Natural killer cell (primary cell): ENCODE measurements at regions of chr19 and their contacts with region 1.

Region 1: DNA sequence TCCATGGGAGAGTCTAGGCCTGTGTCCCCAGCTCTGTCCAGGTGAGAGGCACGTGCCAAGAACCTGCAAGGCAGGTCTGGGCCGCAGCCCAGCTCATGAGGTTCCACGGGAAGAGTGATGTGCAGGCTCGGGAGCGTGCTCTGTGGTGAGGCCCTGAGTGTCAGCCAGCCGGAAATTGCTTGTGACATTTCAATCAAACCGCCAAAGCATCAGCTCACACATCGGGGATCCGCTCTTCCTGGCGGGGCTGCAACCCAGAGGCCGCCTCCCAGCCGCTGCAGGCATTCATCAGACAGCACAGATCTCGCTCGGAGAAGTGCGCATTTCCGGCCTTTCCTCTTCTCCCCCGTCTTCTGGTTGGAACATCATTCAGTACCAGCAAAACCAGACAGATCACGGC is 109.3 kb downstream of the KDM4B start:
- DNase-seq: peak in 1 of 2 donors; percentile 69
- ATAC-seq: peak; percentile 22 to 65 (median 58)
- H3K4me3 ChIP-seq: no peak overlapping the region
- H3K4me3 Mint-ChIP-seq: no peak overlapping the region
- H3K27ac ChIP-seq: peak overlapping the region; percentile 35
- H3K27ac Mint-ChIP-seq: peak overlapping the region; percentile 65 to 73
- H3K4me1 ChIP-seq: peaks cover 54% of the 10 kb centered on the region
- H3K4me1 Mint-ChIP-seq: peaks cover 45 to 49% of the 10 kb centered on the region in 2 donors
- H3K27me3 ChIP-seq: no peaks in the 10 kb centered on the region
- H3K27me3 Mint-ChIP-seq: no peaks in the 10 kb centered on the region
- CTCF ChIP-seq: no peak

Region 2: GRCh38 chr19:5038631-5039271 is 39.4 kb before region 1 on chr19:
- intact Hi-C with region 1: no loop called
- DNase-seq: peak in 1 of 2 donors; percentile 34
- ATAC-seq: no peak
- H3K4me3 ChIP-seq: no peak overlapping the region
- H3K4me3 Mint-ChIP-seq: no peak overlapping the region
- H3K27ac ChIP-seq: no peak overlapping the region
- H3K27ac Mint-ChIP-seq: no peak overlapping the region
- H3K4me1 ChIP-seq: no peaks in the 10 kb centered on the region
- H3K4me1 Mint-ChIP-seq: peaks cover 0 to 18% of the 10 kb centered on the region in 2 donors
- H3K27me3 ChIP-seq: no peaks in the 10 kb centered on the region
- H3K27me3 Mint-ChIP-seq: no peaks in the 10 kb centered on the region
- CTCF ChIP-seq: no peak

Region 3: DNA sequence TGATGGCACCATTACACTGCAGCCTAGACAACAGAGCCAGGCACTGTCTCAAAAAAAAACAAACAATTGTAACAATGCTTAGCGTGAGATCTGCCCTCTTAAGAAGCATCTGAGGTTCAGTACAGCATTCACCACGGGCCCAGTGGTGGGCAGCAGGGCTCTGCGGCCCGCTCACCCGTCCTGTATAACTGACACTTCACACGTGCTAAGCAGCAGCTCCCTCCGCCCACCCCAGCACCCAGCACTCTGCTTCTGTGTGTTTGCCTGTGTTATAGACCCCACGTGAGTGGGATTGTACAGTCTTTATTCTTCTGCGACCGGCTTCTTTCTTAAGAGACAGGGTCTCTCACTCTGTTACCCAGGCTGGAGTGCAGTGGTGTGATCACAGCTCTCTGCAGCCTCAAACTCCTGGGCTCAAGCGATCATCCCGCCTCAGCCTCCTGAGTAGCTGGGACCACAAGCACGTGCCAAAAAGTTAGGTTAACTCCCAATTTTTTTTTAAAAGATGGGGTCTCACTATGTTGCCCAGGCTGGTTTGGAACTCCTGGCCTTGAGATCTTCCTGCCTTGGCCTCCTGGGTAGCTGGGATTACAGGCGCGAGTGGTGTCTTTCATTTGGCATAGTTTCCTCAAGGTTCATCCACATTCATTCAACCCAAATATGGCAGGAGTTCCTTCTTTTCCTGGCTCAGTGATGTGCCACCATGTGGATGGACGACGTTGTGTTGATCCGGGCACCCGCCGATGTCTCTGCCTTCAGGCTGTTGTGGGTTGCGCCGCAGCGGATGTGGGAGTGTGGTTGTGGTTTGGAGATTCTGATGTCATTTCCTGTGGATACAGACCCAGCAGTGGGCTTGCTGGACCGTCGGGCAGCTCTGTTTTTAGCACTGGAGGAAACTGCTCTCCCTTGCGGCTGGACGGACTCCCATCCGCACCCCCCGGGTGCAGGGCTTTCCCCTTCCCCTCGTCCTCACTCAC is 60.7 kb after region 1 on chr19:
- intact Hi-C with region 1: loop called (anchors 5 kb)
- DNase-seq: peak; percentile 85 to 89
- ATAC-seq: peak; percentile 72 to 89 (median 82)
- H3K4me3 ChIP-seq: no peak overlapping the region
- H3K4me3 Mint-ChIP-seq: peak overlapping the region; percentile 79
- H3K27ac ChIP-seq: no peak overlapping the region
- H3K27ac Mint-ChIP-seq: peak overlapping the region; percentile 85 to 94
- H3K4me1 ChIP-seq: peaks cover 81% of the 10 kb centered on the region
- H3K4me1 Mint-ChIP-seq: peaks cover 23 to 38% of the 10 kb centered on the region in 2 donors
- H3K27me3 ChIP-seq: no peaks in the 10 kb centered on the region
- H3K27me3 Mint-ChIP-seq: peaks cover 0 to 3% of the 10 kb centered on the region in 2 donors
- CTCF ChIP-seq: no peak